ENCODE measurements at regions of chr10 and their contacts with region 1.

Region 1: GRCh38 chr10:32964270-32964669 is 6.2 kb upstream of the ITGB1 start:
- DNase-seq: no peak
- ATAC-seq: no peak
- H3K4me3 ChIP-seq: no peak overlapping the region
- H3K27ac ChIP-seq: peak overlapping the region in 6 of 10 donors; percentile 12 to 100 (median 84)
- H3K4me1 ChIP-seq: peaks cover 0 to 53% (median 43%) of the 10 kb centered on the region in 9 donors
- H3K27me3 ChIP-seq: no peaks in the 10 kb centered on the region
- CTCF ChIP-seq: no peak

Region 2: GRCh38 chr10:32445740-32446535 is 518.3 kb before region 1 on chr10 and contains the start of gene CCDC7:
- intact Hi-C with region 1: no loop called
- DNase-seq: peak; percentile 85 to 89
- ATAC-seq: peak; percentile 98 to 99 (median 98)
- H3K4me3 ChIP-seq: peak within 1 kb of the TSS; percentile 56 to 85 (median 74)
- H3K27ac ChIP-seq: peak within 1 kb of the TSS; percentile 95 to 99 (median 98)
- H3K4me1 ChIP-seq: peaks cover 0 to 19% (median 9%) of the 10 kb centered on the region in 9 donors
- H3K27me3 ChIP-seq: no peaks in the 10 kb centered on the region
- CTCF ChIP-seq: peak; percentile 33 to 84 (median 55)
- total RNA-seq, gene CCDC7: 17.8 to 34.1 (median 21.0) TPM

Region 3: DNA sequence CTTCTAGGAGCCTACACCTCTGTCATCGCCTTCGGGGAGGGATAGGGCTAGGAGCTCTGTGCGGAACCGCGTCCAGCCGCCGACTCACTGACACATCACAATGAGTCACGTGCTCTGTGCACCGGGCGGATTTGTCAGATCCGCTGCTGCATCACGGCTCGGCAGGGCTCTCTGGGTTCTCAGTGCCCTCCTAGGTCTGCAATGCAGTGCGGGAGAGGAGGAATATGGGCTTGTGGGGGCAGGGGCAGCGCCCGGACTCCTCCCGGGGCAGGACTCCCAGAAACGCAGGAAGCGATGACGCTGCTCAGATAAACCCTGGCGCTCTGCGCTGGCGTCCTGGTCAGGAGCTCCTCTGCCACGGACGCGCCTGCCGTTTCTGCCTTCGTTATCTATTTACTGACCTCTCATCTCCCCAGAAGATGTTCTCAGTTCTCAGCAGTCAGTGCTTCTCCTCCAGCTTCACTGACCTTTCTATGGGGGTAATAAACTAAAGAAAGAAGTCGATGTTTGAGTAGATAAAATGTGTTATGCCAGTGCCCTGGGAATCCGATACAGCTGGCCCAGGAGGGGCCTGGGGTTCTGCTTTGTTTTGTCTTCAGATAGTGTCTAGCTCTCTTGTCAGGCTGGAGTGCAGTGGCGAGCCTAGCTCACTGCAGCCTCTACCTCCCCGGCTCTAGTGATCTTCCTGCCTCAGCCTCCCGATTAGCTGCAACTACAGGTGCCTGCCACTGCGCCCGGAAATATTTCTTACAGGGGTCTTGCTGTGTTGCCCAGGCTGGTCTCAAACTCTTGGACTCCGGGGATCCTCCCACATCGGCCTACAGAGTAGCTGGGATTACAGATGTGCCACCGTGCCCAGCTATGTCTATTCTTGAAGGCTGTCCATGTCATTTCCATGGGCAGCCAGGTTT is 16.5 kb after region 1 on chr10:
- intact Hi-C with region 1: loop called in 4 of 10 experiments (anchors 2 kb)
- DNase-seq: peak; percentile 87 to 88
- ATAC-seq: peak; percentile 91 to 99 (median 94)
- H3K4me3 ChIP-seq: peak overlapping the region; percentile 28 to 64 (median 58)
- H3K27ac ChIP-seq: peak overlapping the region; percentile 67 to 98 (median 94)
- H3K4me1 ChIP-seq: peaks cover 0 to 59% (median 32%) of the 10 kb centered on the region in 9 donors
- H3K27me3 ChIP-seq: no peaks in the 10 kb centered on the region
- CTCF ChIP-seq: no peak